HEK293 (cell line): ENCODE measurements at regions of chr2 and their contacts with region 1.

Region 1: GRCh38 chr2:23824777-23825212 is 102.1 kb downstream of the ATAD2B start:
- H3K4me3 ChIP-seq: no peak overlapping the region
- H3K27ac ChIP-seq: no peak overlapping the region
- H3K4me1 ChIP-seq: no peaks in the 10 kb centered on the region
- CTCF ChIP-seq: peak; percentile 44; the same call in 1 of the 2 replicates

Region 2: DNA sequence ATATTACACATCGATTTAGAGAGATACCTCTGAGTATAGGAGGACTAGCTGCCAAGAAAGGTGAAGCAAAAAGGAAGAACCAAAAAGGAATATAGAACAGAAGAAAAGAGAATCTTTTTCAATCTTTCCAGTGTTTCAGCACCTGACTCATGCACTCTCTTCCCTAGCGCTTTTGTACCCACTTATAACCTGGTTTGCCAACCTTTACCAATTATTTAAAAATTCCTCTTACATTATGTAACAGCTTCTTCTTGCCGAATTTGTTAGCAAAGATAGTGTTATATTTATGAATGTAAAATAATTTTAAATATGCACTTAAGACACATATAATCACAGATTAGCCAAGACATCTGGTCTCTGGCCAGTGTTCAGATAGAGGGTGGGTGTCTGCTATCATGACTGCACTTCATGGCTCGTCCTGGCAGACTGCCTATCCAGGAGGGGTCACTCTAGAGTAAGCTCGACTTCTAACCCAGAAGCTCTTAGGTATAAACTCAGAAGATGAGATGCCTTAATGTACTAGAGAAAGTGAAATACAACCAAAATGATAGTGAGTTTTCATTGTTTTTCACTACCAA is 20.7 kb before region 1 on chr2:
- CTCF ChIA-PET with region 1: interaction called, 14 read pairs
- POLR2A ChIA-PET with region 1: no interaction called
- H3K4me3 ChIP-seq: no peak overlapping the region
- H3K27ac ChIP-seq: no peak overlapping the region
- H3K4me1 ChIP-seq: peaks cover 16% of the 10 kb centered on the region
- CTCF ChIP-seq: peak; percentile 17; the same call in 1 of the 2 replicates

Region 3: GRCh38 chr2:23835988-23836387 is 11.2 kb after region 1 on chr2:
- CTCF ChIA-PET with region 1: interaction called, 15 read pairs
- POLR2A ChIA-PET with region 1: no interaction called
- H3K4me3 ChIP-seq: no peak overlapping the region
- H3K27ac ChIP-seq: no peak overlapping the region
- H3K4me1 ChIP-seq: no peaks in the 10 kb centered on the region
- CTCF ChIP-seq: no peak

Region 4: GRCh38 chr2:23926750-23927571 is 102.2 kb after region 1 on chr2 and contains the start of gene ATAD2B:
- CTCF ChIA-PET with region 1: interaction called, 28 read pairs
- POLR2A ChIA-PET with region 1: interaction called, 10 read pairs
- H3K4me3 ChIP-seq: peak within 1 kb of the TSS; percentile 98
- H3K27ac ChIP-seq: peak within 1 kb of the TSS; percentile 86
- H3K4me1 ChIP-seq: peaks cover 9% of the 10 kb centered on the region
- CTCF ChIP-seq: peak; percentile 89

Region 5: GRCh38 chr2:24084386-24085361 is 259.9 kb after region 1 on chr2 and contains the start of gene TP53I3:
- CTCF ChIA-PET with region 1: interaction called, 23 read pairs
- POLR2A ChIA-PET with region 1: interaction called, 3 read pairs
- H3K4me3 ChIP-seq: peak within 1 kb of the TSS; percentile 68
- H3K27ac ChIP-seq: peak within 1 kb of the TSS; percentile 79
- H3K4me1 ChIP-seq: no peaks in the 10 kb centered on the region
- CTCF ChIP-seq: peak; percentile 99

Region 6: DNA sequence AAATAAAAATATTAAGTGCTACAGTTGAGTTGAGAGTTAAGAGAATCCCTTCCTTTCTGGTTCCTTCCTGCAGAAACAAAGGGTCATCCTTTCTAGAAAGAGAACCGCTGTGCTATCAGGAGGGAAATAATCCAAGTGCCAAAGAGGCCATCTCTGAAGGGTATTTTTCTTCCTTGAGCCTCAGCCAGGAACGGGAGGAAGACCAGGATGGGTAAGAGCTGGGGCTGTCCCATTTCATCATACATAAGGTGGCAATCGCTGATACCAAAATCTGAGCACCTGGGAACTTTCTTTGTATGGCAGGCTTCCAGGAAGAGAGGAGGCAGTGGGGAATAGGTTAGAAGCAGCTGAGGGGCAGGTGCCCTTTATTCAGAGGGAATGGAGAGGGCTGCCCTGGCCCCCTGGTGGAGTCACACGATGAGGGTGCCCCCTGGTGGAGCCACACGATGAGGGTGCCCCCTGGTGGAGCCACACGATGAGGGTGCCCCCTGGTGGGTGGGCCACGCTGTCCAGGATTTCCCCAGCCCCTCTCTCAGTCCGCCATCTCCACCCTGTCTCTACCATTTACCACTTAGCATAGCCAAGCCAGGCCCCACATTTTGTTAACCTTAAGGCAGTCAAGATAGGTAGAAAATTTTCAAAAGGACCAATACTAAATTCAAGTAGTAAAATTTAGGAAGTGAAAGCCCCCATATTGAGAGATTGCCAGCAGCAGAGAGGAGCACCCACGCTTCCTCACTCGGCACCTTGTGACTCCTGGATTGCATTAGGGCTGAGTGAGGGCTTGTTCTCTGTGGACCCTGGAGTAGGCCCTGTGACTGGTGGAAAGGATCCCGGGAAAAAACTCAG is 339.6 kb after region 1 on chr2:
- CTCF ChIA-PET with region 1: interaction called, 11 read pairs
- POLR2A ChIA-PET with region 1: no interaction called
- H3K4me3 ChIP-seq: no peak overlapping the region
- H3K27ac ChIP-seq: no peak overlapping the region
- H3K4me1 ChIP-seq: no peaks in the 10 kb centered on the region
- CTCF ChIP-seq: peak; percentile 48; the same call in 1 of the 2 replicates